Activated CD8-positive, alpha-beta memory T cell treated with anti-CD3 and anti-CD28 coated beads, Interleukin-2, amount 10 ng/mL, durations not matched to agents 7 days and 5 days (primary cell): ENCODE measurements at regions of chr17 and their contacts with region 1.

Region 1: GRCh38 chr17:42101513-42102319 is 3.4 kb upstream of the ZNF385C start:
- DNase-seq: peak; percentile 80
- ATAC-seq: peak; percentile 64
- H3K4me3 Mint-ChIP-seq: no peak overlapping the region
- H3K27ac Mint-ChIP-seq: no peak overlapping the region
- H3K4me1 Mint-ChIP-seq: peaks cover 8% of the 10 kb centered on the region
- H3K27me3 Mint-ChIP-seq: peaks cover 15% of the 10 kb centered on the region

Region 2: GRCh38 chr17:41982026-41982760 is 119.5 kb before region 1 on chr17:
- CTCF ChIA-PET with region 1: no interaction called
- DNase-seq: no peak
- ATAC-seq: no peak
- H3K4me3 Mint-ChIP-seq: no peak overlapping the region
- H3K27ac Mint-ChIP-seq: no peak overlapping the region
- H3K4me1 Mint-ChIP-seq: no peaks in the 10 kb centered on the region
- H3K27me3 Mint-ChIP-seq: no peaks in the 10 kb centered on the region

Region 3: DNA sequence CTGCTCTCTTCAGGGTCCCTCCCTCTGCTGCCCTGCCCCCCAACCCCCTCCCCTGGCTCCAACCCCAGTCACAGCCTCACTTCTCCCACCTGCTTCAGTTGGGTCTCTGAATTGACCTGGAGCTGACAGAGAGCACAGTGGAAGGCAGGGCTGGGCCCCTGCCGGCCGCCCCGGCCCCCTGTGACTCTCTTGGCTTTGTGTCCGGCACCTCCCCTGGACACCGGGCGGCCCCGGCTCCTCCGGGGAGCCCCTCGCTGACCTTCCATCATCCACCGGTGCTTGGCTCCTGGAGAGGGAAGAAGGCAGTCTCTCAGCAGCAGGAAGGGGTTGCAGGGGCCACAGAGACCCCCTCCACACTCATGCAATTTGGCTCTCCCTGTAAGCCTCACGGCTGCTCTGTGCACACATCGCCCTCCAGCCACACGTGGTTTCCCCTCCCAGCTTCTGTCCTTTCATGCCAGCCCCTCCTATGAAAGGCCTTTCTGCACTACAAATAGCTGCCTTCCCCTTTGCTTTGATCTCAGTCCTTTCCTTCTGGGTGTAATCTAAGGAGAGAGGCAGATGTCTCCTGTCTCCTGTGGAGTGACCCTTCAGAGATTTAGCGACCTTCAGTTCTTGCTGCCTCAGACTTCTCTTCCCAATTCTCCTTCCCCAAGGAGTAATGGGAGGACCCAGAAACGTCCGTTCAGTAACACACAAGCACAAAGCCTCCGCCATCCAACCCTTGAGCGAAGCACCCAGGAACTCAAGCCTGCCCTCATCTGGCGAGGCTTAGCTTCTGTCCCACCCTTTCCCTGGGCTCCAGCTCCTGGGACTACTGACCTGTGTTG is 73.5 kb before region 1 on chr17:
- CTCF ChIA-PET with region 1: interaction called, 35 read pairs
- DNase-seq: no peak
- ATAC-seq: no peak
- H3K4me3 Mint-ChIP-seq: no peak overlapping the region
- H3K27ac Mint-ChIP-seq: no peak overlapping the region
- H3K4me1 Mint-ChIP-seq: peaks cover 4% of the 10 kb centered on the region
- H3K27me3 Mint-ChIP-seq: peaks cover 4% of the 10 kb centered on the region

Region 4: DNA sequence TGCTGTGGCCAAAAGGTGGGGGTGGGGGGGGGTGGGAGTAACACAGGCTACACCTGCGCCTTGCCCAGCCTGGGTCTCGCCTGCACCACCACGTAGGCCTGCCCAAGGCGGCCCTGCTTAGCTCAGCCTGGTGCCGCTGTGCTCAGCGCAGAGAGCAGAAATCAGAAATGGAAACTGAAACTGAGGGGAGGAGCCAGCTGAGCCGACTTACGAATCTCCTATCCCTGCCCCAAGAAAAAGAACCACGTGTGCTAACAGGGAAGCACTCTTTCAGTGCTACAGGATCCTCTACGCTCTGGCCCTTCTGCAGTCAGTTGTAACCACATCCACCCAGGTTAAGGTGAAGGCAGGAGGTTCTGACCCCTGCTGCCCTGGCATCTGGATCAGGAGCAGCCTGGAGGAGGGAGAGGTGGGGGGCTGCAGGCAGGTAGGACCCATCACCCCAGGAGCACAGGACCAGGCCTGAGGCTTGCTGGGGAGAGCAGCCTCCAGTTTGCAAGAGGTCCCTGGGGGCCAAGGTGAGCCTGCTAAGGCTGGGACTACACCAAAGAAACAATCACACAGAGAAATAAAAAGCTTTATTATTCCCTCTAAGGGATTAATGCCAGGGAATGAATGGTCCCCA is 10.9 kb after region 1 on chr17 and contains the start of gene DHX58:
- CTCF ChIA-PET with region 1: interaction called, 14 read pairs
- DNase-seq: peak; percentile 92
- ATAC-seq: peak; percentile 85
- H3K4me3 Mint-ChIP-seq: peak within 1 kb of the TSS; percentile 91
- H3K27ac Mint-ChIP-seq: peak within 1 kb of the TSS; percentile 98
- H3K4me1 Mint-ChIP-seq: peaks cover 56% of the 10 kb centered on the region
- H3K27me3 Mint-ChIP-seq: no peaks in the 10 kb centered on the region
- total RNA-seq, gene DHX58: 65.8 to 105 TPM